ENCODE measurements at regions of chr19 and their contacts with region 1.

Region 1: DNA sequence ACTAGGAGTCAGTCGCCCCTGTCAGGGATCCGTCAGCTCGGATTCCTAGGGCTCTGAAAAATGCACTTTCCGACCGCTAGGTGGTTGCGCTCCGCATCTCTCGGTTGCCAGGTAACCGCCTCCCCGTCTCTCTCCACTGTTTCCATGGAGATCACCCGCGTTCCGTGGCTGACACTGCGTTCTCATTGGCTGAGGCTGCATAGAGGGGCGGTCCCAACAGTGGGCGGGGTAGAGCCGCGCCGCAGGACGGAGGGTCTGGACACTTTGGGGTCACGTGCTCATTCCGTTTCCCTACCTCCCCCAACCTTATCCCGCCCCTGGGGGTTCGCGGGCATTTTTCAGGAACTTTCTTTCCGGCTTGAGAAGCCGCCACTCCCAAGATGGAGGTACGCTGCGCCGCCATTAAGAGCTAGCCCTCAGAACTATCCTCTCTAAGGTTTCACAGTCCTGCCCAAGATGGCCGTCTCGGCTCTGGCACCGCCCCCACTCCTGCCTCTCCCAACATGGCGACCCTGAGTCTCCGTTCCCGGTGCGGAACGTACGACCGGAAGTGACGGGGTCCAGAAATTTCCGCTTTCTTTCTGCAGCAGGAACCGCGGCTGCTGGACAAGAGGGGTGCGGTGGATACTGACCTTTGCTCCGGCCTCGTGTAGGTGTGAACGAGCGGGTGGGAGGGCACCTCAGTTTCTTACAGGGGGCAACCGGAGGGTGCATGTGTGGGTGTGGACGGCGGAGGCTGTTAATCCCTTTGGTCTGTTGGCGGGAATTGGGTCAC is at the starts of genes ODAD3 and PRKCSH:
- DNase-seq: peak; percentile 99
- ATAC-seq: peak; percentile 98 to 99
- H3K4me3 ChIP-seq: peak within 1 kb of the TSS; percentile 91
- H3K27ac ChIP-seq: peak within 1 kb of the TSS; percentile 73
- H3K4me1 ChIP-seq: peaks cover 2% of the 10 kb centered on the region
- H3K27me3 ChIP-seq: no peaks in the 10 kb centered on the region
- total RNA-seq, gene ODAD3: 1.0 to 1.2 (median 1.0) TPM
- total RNA-seq, gene PRKCSH: 125 to 158 (median 137) TPM

Region 2: GRCh38 chr19:11346092-11346940 is 88.9 kb before region 1 on chr19 and contains the starts of genes CCDC159 and TMEM205:
- intact Hi-C with region 1: no loop called
- DNase-seq: peak; percentile 99
- ATAC-seq: peak; percentile 95
- H3K4me3 ChIP-seq: peak within 1 kb of the TSS; percentile 68
- H3K27ac ChIP-seq: peak within 1 kb of the TSS; percentile 87
- H3K4me1 ChIP-seq: peaks cover 7% of the 10 kb centered on the region
- H3K27me3 ChIP-seq: no peaks in the 10 kb centered on the region
- total RNA-seq, gene CCDC159: 16.7 to 26.5 (median 24.9) TPM
- total RNA-seq, gene TMEM205: 92.9 to 105 (median 98.1) TPM

Region 3: GRCh38 chr19:11380653-11381534 is 54.4 kb before region 1 on chr19:
- intact Hi-C with region 1: loop called in 2 of 4 experiments (anchors 10 kb)
- DNase-seq: peak; percentile 93 to 97 (median 96)
- ATAC-seq: peak; percentile 88 to 90
- H3K4me3 ChIP-seq: peak overlapping the region; percentile 47
- H3K27ac ChIP-seq: peak overlapping the region; percentile 46
- H3K4me1 ChIP-seq: peaks cover 8% of the 10 kb centered on the region
- H3K27me3 ChIP-seq: no peaks in the 10 kb centered on the region

Region 4: GRCh38 chr19:11463391-11463790 is 28.1 kb after region 1 on chr19:
- intact Hi-C with region 1: no loop called
- DNase-seq: no peak
- ATAC-seq: no peak
- H3K4me3 ChIP-seq: no peak overlapping the region
- H3K27ac ChIP-seq: no peak overlapping the region
- H3K4me1 ChIP-seq: no peaks in the 10 kb centered on the region
- H3K27me3 ChIP-seq: no peaks in the 10 kb centered on the region

Region 5: GRCh38 chr19:11745869-11746268 is 310.6 kb after region 1 on chr19:
- intact Hi-C with region 1: no loop called
- DNase-seq: no peak
- ATAC-seq: no peak
- H3K4me3 ChIP-seq: no peak overlapping the region
- H3K27ac ChIP-seq: no peak overlapping the region
- H3K4me1 ChIP-seq: no peaks in the 10 kb centered on the region
- H3K27me3 ChIP-seq: no peaks in the 10 kb centered on the region

Measured in right cardiac atrium (tissue), 5 donors.